ENCODE measurements at regions of chr6 and their contacts with region 1.

Region 1: DNA sequence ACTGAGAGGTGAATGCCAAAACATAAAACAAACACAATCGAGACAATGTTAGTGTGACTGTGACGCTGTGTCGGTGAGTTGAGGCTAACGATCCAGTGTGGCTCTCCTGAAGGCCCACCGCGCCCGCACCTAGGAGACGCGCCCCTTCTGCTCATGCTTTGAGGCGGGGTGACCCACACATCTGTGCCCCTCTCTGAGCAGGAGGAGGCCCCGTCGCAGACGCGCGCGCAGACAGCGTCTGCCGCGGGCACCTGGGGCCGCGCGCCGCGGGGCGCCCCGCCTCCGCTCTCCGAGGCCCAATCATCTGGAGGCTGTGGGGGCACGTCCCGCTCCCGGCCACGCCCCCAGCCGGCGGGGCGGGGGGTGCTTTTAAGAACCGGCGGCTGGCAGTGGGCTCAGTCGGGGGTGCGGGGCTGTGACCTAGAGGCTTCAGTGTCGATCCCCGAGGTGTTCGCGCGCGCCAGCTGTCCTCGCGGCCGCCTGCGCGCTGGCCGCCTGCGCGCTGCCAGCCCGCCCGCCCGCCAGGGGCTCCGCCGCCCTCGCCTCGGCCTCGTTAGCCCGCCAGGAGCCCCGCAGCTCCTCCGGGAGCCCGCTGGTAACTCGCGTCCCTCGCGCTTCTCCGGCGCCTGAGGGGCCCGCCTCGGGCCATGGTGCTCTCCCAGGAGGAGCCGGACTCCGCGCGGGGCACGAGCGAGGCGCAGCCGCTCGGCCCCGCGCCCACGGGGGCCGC is at the start of gene SLC16A10:
- DNase-seq: peak; percentile 63 to 93 (median 82)
- ATAC-seq: peak; percentile 83
- H3K4me3 ChIP-seq: peak within 1 kb of the TSS; percentile 60
- H3K4me3 Mint-ChIP-seq: peak within 1 kb of the TSS; percentile 95
- H3K27ac ChIP-seq: peak within 1 kb of the TSS; percentile 40 to 53
- H3K27ac Mint-ChIP-seq: peak within 1 kb of the TSS; percentile 92
- H3K4me1 ChIP-seq: no peaks in the 10 kb centered on the region
- H3K4me1 Mint-ChIP-seq: peaks cover 48% of the 10 kb centered on the region
- H3K27me3 ChIP-seq: no peaks in the 10 kb centered on the region
- H3K27me3 Mint-ChIP-seq: no peaks in the 10 kb centered on the region
- CTCF ChIP-seq: no peak
- total RNA-seq, gene SLC16A10: 13.4 to 13.8 TPM

Region 2: GRCh38 chr6:110981202-110981600 is 106.1 kb before region 1 on chr6:
- CTCF ChIA-PET with region 1: no interaction called
- POLR2A ChIA-PET with region 1: no interaction called
- intact Hi-C with region 1: loop called in 1 of 2 experiments (anchors 10 kb)
- DNase-seq: peak in 1 of 14 experiments; percentile 43
- ATAC-seq: peak; percentile 1
- H3K4me3 ChIP-seq: peak overlapping the region; percentile 99
- H3K4me3 Mint-ChIP-seq: peak overlapping the region; percentile 99
- H3K27ac ChIP-seq: peak overlapping the region; percentile 77 to 97
- H3K27ac Mint-ChIP-seq: peak overlapping the region; percentile 99
- H3K4me1 ChIP-seq: peaks cover 14% of the 10 kb centered on the region
- H3K4me1 Mint-ChIP-seq: peaks cover 49% of the 10 kb centered on the region
- H3K27me3 ChIP-seq: no peaks in the 10 kb centered on the region
- H3K27me3 Mint-ChIP-seq: no peaks in the 10 kb centered on the region
- CTCF ChIP-seq: no peak

Region 3: DNA sequence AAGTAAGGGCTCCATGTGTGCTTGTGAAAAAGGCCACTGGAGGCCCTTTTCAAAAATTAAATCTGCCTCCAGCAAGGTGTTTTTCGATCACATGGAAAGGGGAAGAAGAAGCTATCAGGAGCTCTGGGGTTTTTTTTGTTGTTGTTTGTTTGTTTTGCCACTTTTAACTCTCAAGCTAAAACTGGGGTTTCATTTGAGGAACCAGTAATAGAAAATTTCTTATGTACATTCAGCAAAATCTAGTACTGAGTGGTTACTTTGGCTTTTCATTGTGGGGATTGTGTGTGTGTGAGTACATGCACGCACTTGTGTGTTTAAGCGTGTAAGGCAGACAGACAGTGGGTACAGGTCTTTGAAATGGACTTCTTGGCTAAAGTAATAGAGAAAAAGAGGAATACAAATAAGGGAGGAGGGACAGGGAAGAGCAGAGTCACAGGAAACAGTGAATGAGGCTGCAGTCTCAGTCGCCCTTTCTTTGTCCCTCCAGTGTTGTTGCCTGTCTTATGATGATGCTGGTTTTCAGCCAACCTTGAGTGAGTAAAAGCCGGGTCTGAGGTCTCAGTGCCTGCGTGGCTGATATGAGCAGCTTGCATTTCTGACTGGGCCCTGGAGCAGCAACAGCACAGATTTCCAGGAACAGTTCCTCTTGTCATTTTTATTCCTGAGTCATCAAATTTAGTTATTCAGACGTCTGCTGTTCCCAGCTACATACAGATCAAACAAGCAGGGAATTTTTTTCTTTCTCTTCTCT is 26.2 kb after region 1 on chr6:
- CTCF ChIA-PET with region 1: no interaction called
- POLR2A ChIA-PET with region 1: interaction called, 7 read pairs
- intact Hi-C with region 1: loop called in 1 of 2 experiments (anchors 1 kb)
- DNase-seq: peak in 8 of 14 experiments; percentile 3 to 54 (median 16)
- ATAC-seq: peak; percentile 54
- H3K4me3 ChIP-seq: no peak overlapping the region
- H3K4me3 Mint-ChIP-seq: peak overlapping the region; percentile 52
- H3K27ac ChIP-seq: peak overlapping the region; percentile 19 to 67
- H3K27ac Mint-ChIP-seq: peak overlapping the region; percentile 85
- H3K4me1 ChIP-seq: peaks cover 17% of the 10 kb centered on the region
- H3K4me1 Mint-ChIP-seq: peaks cover 48% of the 10 kb centered on the region
- H3K27me3 ChIP-seq: no peaks in the 10 kb centered on the region
- H3K27me3 Mint-ChIP-seq: no peaks in the 10 kb centered on the region
- CTCF ChIP-seq: no peak

Region 4: DNA sequence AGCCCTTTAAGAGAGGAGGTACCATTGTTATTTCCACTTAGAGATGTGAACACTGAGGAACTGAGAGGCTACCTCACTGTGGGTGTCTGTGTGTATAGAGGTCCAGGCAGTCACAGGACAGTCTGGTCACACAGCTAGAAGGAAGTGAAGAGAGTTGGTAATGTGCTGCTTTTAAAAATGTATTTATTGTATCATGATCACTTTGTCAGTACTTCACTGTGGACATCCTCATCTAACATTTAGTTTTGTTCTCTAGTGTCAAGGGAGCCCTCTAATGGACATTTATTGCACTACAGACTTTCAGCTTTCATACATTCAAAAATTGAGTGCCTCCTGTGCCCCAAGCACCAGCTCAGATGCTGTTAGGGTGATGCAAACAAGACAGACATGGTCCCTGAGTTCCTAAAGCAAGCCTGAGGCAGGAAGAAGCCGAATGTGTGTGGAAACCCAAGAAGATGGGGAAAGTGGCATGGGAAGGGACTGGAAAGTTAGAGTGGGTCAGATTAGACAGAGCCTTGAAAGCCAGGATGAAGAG is 123.0 kb after region 1 on chr6:
- CTCF ChIA-PET with region 1: interaction called, 5 read pairs
- POLR2A ChIA-PET with region 1: no interaction called
- intact Hi-C with region 1: loop called in 1 of 2 experiments (anchors 1 kb)
- DNase-seq: peak in 5 of 14 experiments; percentile 9 to 76 (median 68)
- ATAC-seq: peak; percentile 83
- H3K4me3 ChIP-seq: no peak overlapping the region
- H3K4me3 Mint-ChIP-seq: no peak overlapping the region
- H3K27ac ChIP-seq: no peak overlapping the region
- H3K27ac Mint-ChIP-seq: no peak overlapping the region
- H3K4me1 ChIP-seq: no peaks in the 10 kb centered on the region
- H3K4me1 Mint-ChIP-seq: peaks cover 6% of the 10 kb centered on the region
- H3K27me3 ChIP-seq: no peaks in the 10 kb centered on the region
- H3K27me3 Mint-ChIP-seq: no peaks in the 10 kb centered on the region
- CTCF ChIP-seq: peak; percentile 82